CD8-positive, alpha-beta T cell (primary cell): ENCODE measurements at regions of chr11 and their contacts with region 1.

Region 1: GRCh38 chr11:13772223-13773046 is 104.0 kb downstream of the FAR1 start:
- DNase-seq: peak in 4 of 9 experiments; percentile 21 to 84 (median 60)
- ATAC-seq: peak; percentile 66
- H3K4me3 ChIP-seq: no peak overlapping the region
- H3K4me3 Mint-ChIP-seq: no peak overlapping the region
- H3K27ac ChIP-seq: no peak overlapping the region
- H3K27ac Mint-ChIP-seq: no peak overlapping the region
- H3K4me1 ChIP-seq: no peaks in the 10 kb centered on the region
- H3K4me1 Mint-ChIP-seq: peaks cover 3% of the 10 kb centered on the region
- H3K27me3 ChIP-seq: no peaks in the 10 kb centered on the region
- H3K27me3 Mint-ChIP-seq: peaks cover 6% of the 10 kb centered on the region
- CTCF ChIP-seq: peak; percentile 75

Region 2: DNA sequence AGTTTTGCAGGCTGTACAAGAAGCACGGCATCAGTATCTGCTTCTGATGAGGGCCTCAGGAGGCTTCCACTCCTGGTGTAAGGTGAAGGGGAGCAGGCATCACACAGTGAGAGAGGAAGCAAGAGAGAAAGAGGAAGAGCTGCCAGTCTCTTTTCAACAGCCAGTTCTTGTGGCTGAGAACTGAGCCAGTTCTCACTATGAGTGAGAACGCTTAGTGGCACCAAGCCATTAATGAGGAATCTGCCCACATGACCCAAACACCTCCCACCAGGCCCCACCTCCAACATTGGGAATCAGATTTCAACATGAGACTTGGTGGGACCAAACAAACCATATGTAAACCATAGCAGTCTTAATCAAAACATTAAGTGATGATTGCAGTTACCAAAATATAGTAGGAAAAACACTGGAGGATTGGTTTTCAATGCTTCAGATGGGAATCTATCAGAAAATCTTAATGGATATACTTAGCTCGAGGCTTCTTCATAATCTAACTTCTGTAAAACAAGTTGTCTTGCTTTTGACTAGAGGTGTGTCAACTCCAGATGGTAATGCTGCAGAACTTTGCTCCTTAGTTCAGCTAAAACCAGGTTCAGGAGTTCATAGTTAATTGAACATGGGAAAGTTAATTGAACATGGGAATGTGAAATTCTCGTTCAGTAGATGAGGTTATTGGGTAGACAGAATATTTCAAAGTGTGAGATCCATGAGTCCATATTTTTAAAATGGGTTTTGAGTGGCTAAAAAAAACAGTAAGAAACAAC is 91.8 kb before region 1 on chr11:
- CTCF ChIA-PET with region 1: no interaction called
- POLR2A ChIA-PET with region 1: no interaction called
- intact Hi-C with region 1: no loop called
- DNase-seq: peak in 1 of 9 experiments; percentile 4
- ATAC-seq: no peak
- H3K4me3 ChIP-seq: no peak overlapping the region
- H3K4me3 Mint-ChIP-seq: no peak overlapping the region
- H3K27ac ChIP-seq: no peak overlapping the region
- H3K27ac Mint-ChIP-seq: no peak overlapping the region
- H3K4me1 ChIP-seq: no peaks in the 10 kb centered on the region
- H3K4me1 Mint-ChIP-seq: peaks cover 64% of the 10 kb centered on the region
- H3K27me3 ChIP-seq: no peaks in the 10 kb centered on the region
- H3K27me3 Mint-ChIP-seq: no peaks in the 10 kb centered on the region
- CTCF ChIP-seq: no peak

Region 3: DNA sequence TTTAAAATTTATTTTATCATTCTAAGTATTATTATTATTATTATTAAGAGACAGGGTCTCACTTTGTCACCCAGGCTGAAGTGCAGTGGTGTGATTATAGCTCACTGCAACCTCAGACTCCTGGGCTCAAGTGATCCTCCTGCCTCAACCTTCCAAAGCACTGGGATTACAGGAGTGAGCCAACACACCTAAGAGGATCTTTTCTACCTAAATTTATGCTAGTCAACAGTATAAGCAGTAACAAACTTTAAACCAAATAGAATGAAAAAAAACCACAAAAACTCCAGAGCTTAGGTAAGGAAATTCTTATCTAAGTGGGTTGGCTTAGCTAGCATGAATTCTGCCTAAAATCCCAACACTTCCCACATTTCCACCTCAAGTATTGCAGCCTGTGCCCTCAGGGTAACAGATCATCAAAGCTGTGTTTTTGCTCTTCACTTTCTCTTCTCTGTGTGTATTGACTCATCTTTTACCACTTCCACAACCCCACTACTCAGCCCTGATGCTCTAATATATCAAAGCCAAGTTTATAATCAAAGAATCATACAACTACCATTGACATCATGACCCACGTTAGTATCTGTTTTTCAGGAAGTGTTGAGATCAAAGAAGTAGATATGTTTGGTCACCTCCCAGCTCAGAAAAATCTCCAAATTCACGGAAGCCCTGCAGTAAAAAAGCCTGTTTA is 96.4 kb after region 1 on chr11:
- CTCF ChIA-PET with region 1: interaction called, 4 read pairs
- POLR2A ChIA-PET with region 1: interaction called, 4 read pairs
- intact Hi-C with region 1: loop called in 1 of 2 experiments (anchors 2 kb)
- DNase-seq: peak in 5 of 9 experiments; percentile 12 to 90 (median 57)
- ATAC-seq: peak; percentile 88
- H3K4me3 ChIP-seq: no peak overlapping the region
- H3K4me3 Mint-ChIP-seq: peak overlapping the region; percentile 1
- H3K27ac ChIP-seq: peak overlapping the region; percentile 54 to 82
- H3K27ac Mint-ChIP-seq: peak overlapping the region; percentile 93
- H3K4me1 ChIP-seq: peaks cover 21% of the 10 kb centered on the region
- H3K4me1 Mint-ChIP-seq: peaks cover 33% of the 10 kb centered on the region
- H3K27me3 ChIP-seq: no peaks in the 10 kb centered on the region
- H3K27me3 Mint-ChIP-seq: no peaks in the 10 kb centered on the region
- CTCF ChIP-seq: no peak

Region 4: GRCh38 chr11:13962562-13963168 is 190.2 kb after region 1 on chr11 and contains the start of gene SPON1:
- CTCF ChIA-PET with region 1: interaction called, 26 read pairs
- POLR2A ChIA-PET with region 1: interaction called, 3 read pairs
- intact Hi-C with region 1: loop called in 1 of 2 experiments (anchors 2 kb)
- DNase-seq: peak in 8 of 9 experiments; percentile 26 to 70 (median 52)
- ATAC-seq: peak; percentile 89
- H3K4me3 ChIP-seq: peak within 1 kb of the TSS; percentile 12 to 47
- H3K4me3 Mint-ChIP-seq: peak within 1 kb of the TSS; percentile 82
- H3K27ac ChIP-seq: no peak within 1 kb of the TSS
- H3K27ac Mint-ChIP-seq: no peak within 1 kb of the TSS
- H3K4me1 ChIP-seq: peaks cover 20% of the 10 kb centered on the region
- H3K4me1 Mint-ChIP-seq: peaks cover 13% of the 10 kb centered on the region
- H3K27me3 ChIP-seq: peaks cover 10 to 19% of the 10 kb centered on the region in 2 experiments
- H3K27me3 Mint-ChIP-seq: peaks cover 48% of the 10 kb centered on the region
- CTCF ChIP-seq: no peak
- total RNA-seq, gene SPON1: 1.4 to 2.3 TPM

Region 5: GRCh38 chr11:14234446-14234845 is 462.0 kb after region 1 on chr11:
- CTCF ChIA-PET with region 1: interaction called, 12 read pairs
- POLR2A ChIA-PET with region 1: no interaction called
- intact Hi-C with region 1: no loop called
- DNase-seq: no peak
- ATAC-seq: no peak
- H3K4me3 ChIP-seq: no peak overlapping the region
- H3K4me3 Mint-ChIP-seq: no peak overlapping the region
- H3K27ac ChIP-seq: no peak overlapping the region
- H3K27ac Mint-ChIP-seq: no peak overlapping the region
- H3K4me1 ChIP-seq: no peaks in the 10 kb centered on the region
- H3K4me1 Mint-ChIP-seq: peaks cover 5% of the 10 kb centered on the region
- H3K27me3 ChIP-seq: no peaks in the 10 kb centered on the region
- H3K27me3 Mint-ChIP-seq: no peaks in the 10 kb centered on the region
- CTCF ChIP-seq: no peak

Region 6: GRCh38 chr11:14258221-14258935 is 485.9 kb after region 1 on chr11:
- CTCF ChIA-PET with region 1: interaction called, 130 read pairs
- POLR2A ChIA-PET with region 1: no interaction called
- intact Hi-C with region 1: no loop called
- DNase-seq: no peak
- ATAC-seq: no peak
- H3K4me3 ChIP-seq: no peak overlapping the region
- H3K4me3 Mint-ChIP-seq: no peak overlapping the region
- H3K27ac ChIP-seq: no peak overlapping the region
- H3K27ac Mint-ChIP-seq: peak overlapping the region; percentile 52
- H3K4me1 ChIP-seq: no peaks in the 10 kb centered on the region
- H3K4me1 Mint-ChIP-seq: no peaks in the 10 kb centered on the region
- H3K27me3 ChIP-seq: no peaks in the 10 kb centered on the region
- H3K27me3 Mint-ChIP-seq: no peaks in the 10 kb centered on the region
- CTCF ChIP-seq: no peak

Region 7: GRCh38 chr11:15074206-15075161 is 1302.0 kb after region 1 on chr11:
- CTCF ChIA-PET with region 1: no interaction called
- POLR2A ChIA-PET with region 1: no interaction called
- intact Hi-C with region 1: loop called in 1 of 2 experiments (anchors 10 kb)
- DNase-seq: peak; percentile 64 to 89 (median 80)
- ATAC-seq: peak; percentile 91
- H3K4me3 ChIP-seq: peak overlapping the region; percentile 39 to 60
- H3K4me3 Mint-ChIP-seq: peak overlapping the region; percentile 84
- H3K27ac ChIP-seq: no peak overlapping the region
- H3K27ac Mint-ChIP-seq: no peak overlapping the region
- H3K4me1 ChIP-seq: peaks cover 18% of the 10 kb centered on the region
- H3K4me1 Mint-ChIP-seq: peaks cover 12% of the 10 kb centered on the region
- H3K27me3 ChIP-seq: peaks cover 9 to 16% of the 10 kb centered on the region in 2 experiments
- H3K27me3 Mint-ChIP-seq: peaks cover 27% of the 10 kb centered on the region
- CTCF ChIP-seq: peak; percentile 79